ENCODE measurements at regions of chr20 and their contacts with region 1.

Region 1: GRCh38 chr20:15179381-15179780 is 842.0 kb upstream of the FLRT3 start:
- DNase-seq: no peak
- ATAC-seq: no peak
- H3K4me3 ChIP-seq: no peak overlapping the region
- H3K27ac ChIP-seq: no peak overlapping the region
- H3K4me1 ChIP-seq: no peaks in the 10 kb centered on the region
- H3K27me3 ChIP-seq: no peaks in the 10 kb centered on the region
- CTCF ChIP-seq: no peak
- POLR2A ChIP-seq: no peak

Region 2: GRCh38 chr20:16599257-16599656 is 1419.9 kb after region 1 on chr20:
- in situ Hi-C with region 1: no loop called
- intact Hi-C with region 1: loop called (anchors 10 kb)
- DNase-seq: no peak
- ATAC-seq: no peak
- H3K4me3 ChIP-seq: no peak overlapping the region
- H3K27ac ChIP-seq: no peak overlapping the region
- H3K4me1 ChIP-seq: no peaks in the 10 kb centered on the region
- H3K27me3 ChIP-seq: no peaks in the 10 kb centered on the region
- CTCF ChIP-seq: no peak
- POLR2A ChIP-seq: no peak